ENCODE measurements at regions of chr2 and their contacts with region 1.

Region 1: DNA sequence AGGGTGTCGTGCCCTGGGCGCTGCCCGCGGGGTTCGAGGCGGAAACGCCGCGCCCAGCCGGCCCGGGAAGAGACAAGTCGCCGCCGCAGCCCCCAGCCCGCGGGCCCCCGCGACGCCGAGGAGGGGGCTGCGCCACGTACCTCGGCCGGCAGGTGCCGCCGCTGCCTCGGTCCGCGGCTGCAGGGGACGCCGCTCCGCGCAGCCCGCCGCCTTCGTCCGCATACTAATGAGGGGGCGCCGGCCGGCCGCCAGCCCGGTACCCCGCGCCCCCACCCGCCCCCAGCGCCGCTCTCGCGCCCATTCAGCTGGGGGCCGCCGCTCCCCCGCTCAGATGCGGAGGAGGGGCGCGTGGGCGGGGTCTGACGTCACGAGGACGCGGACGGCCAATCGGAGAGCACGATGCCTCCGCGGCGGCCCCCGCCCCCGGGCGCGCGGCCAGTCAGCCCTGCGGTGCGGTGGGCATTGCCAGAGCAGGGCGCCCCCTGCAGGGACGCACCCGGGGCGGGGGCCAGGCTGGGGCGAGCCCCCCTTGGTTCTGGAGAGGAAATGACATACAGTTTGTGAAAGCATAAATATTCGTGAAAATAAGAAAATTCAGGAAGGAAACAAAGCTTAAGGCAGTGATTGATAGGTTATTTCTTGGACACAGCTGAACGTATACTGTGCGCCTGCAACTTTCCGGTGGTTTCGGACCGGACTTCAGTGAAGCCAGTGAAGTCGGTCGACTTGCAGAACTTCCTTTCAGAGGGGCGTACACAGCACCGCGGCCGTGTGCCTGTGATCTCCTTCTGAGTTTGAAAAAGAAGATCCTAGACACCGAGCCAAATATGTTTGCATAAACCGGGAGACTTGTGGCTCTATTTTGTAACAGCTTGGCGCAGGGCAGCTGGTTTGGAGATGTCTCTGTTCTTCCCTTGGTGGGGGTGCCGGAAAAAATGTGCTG is at the start of gene ST3GAL5:
- DNase-seq: peak; percentile 93
- ATAC-seq: peak; percentile 85
- H3K4me3 Mint-ChIP-seq: peak within 1 kb of the TSS; percentile 94
- H3K27ac Mint-ChIP-seq: peak within 1 kb of the TSS; percentile 92
- H3K4me1 Mint-ChIP-seq: peaks cover 68% of the 10 kb centered on the region
- H3K27me3 Mint-ChIP-seq: no peaks in the 10 kb centered on the region
- total RNA-seq, gene ST3GAL5: 43.4 to 46.7 TPM

Region 2: GRCh38 chr2:85032621-85033020 is 856.3 kb before region 1 on chr2:
- CTCF ChIA-PET with region 1: no interaction called
- POLR2A ChIA-PET with region 1: no interaction called
- DNase-seq: no peak
- ATAC-seq: no peak
- H3K4me3 Mint-ChIP-seq: no peak overlapping the region
- H3K27ac Mint-ChIP-seq: no peak overlapping the region
- H3K4me1 Mint-ChIP-seq: no peaks in the 10 kb centered on the region
- H3K27me3 Mint-ChIP-seq: no peaks in the 10 kb centered on the region

Region 3: DNA sequence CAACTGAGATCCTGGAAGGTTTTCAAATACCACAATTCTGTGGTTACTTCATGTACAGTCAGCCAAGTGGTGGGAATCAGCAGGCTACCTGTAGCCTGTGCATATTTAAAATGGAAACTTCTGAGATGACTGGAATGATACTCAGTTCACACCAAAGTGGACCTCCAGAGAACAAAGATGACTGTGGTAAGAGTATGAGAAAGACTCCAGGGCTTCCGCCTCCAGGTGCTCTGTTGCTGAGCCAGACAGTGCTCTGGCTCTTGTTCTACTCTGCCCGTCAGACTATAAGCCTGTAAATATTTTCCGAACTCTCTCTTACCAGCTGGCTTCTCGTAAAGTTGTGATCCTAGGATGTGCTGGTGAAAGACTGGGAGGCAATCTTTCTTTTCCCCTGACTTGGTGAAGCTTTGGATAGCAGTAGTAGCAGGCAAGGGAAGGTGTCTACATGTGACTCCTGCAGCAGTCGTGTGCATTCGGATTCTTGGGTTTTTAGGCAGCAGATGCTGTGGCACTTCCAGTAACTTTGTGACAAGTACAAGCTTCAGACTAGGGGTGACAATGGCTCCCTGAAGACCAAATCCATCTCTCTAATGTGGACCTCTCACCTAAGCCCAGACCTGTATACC is 23.3 kb before region 1 on chr2:
- CTCF ChIA-PET with region 1: interaction called, 16 read pairs
- POLR2A ChIA-PET with region 1: no interaction called
- DNase-seq: no peak
- ATAC-seq: no peak
- H3K4me3 Mint-ChIP-seq: no peak overlapping the region
- H3K27ac Mint-ChIP-seq: no peak overlapping the region
- H3K4me1 Mint-ChIP-seq: peaks cover 59% of the 10 kb centered on the region
- H3K27me3 Mint-ChIP-seq: no peaks in the 10 kb centered on the region

Region 4: GRCh38 chr2:85902496-85902895 is 13.5 kb after region 1 on chr2:
- CTCF ChIA-PET with region 1: interaction called, 26 read pairs
- POLR2A ChIA-PET with region 1: no interaction called
- DNase-seq: no peak
- ATAC-seq: no peak
- H3K4me3 Mint-ChIP-seq: no peak overlapping the region
- H3K27ac Mint-ChIP-seq: no peak overlapping the region
- H3K4me1 Mint-ChIP-seq: peaks cover 35% of the 10 kb centered on the region
- H3K27me3 Mint-ChIP-seq: no peaks in the 10 kb centered on the region

Region 5: GRCh38 chr2:85926931-85927661 is 38.1 kb after region 1 on chr2:
- CTCF ChIA-PET with region 1: interaction called, 19 read pairs
- POLR2A ChIA-PET with region 1: interaction called, 3 read pairs
- DNase-seq: no peak
- ATAC-seq: no peak
- H3K4me3 Mint-ChIP-seq: no peak overlapping the region
- H3K27ac Mint-ChIP-seq: no peak overlapping the region
- H3K4me1 Mint-ChIP-seq: peaks cover 40% of the 10 kb centered on the region
- H3K27me3 Mint-ChIP-seq: peaks cover 2% of the 10 kb centered on the region

Region 6: DNA sequence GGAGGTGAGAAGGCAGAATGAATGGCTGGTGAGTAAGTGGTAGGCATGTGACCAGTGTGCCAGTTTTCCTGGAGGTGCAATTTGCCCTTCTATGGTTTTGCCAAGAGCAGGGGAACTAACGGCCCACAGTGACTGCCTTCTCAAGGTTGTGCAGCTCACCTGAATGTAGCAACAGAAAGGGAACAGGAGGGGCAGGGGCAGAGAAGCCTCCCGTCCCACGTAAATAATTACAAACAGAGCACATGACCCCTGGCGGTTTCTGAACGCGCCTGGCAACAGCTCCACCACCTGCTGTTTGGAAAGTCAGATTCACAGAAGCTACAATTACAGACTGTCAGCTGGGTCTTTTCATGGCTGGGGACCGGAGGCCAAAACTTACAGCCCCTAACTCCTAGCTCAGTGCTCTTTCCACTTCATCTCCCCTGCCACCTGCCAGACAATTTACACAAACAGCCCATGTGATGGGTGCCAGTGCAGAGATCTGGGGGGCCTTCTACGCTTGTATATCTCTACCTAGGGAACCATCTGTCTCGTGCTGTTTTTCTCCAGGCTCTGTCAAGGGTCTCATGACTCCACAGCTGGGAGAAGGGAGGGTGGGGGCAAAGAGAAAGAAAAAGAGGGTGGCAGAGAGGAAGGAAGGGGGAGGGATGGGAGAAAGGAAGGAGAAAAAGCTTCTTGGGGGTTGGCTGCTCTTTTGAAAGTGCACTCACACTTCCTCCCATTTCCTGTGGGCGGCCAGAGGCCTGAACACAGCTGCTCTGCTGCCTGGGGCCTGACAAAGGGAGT is 147.1 kb after region 1 on chr2:
- CTCF ChIA-PET with region 1: interaction called, 153 read pairs
- POLR2A ChIA-PET with region 1: interaction called, 33 read pairs
- DNase-seq: peak; percentile 81
- ATAC-seq: peak; percentile 48
- H3K4me3 Mint-ChIP-seq: peak overlapping the region; percentile 61
- H3K27ac Mint-ChIP-seq: peak overlapping the region; percentile 95
- H3K4me1 Mint-ChIP-seq: peaks cover 85% of the 10 kb centered on the region
- H3K27me3 Mint-ChIP-seq: no peaks in the 10 kb centered on the region

Region 7: GRCh38 chr2:86124683-86125082 is 235.7 kb after region 1 on chr2:
- CTCF ChIA-PET with region 1: no interaction called
- POLR2A ChIA-PET with region 1: no interaction called
- DNase-seq: no peak
- ATAC-seq: no peak
- H3K4me3 Mint-ChIP-seq: no peak overlapping the region
- H3K27ac Mint-ChIP-seq: no peak overlapping the region
- H3K4me1 Mint-ChIP-seq: no peaks in the 10 kb centered on the region
- H3K27me3 Mint-ChIP-seq: no peaks in the 10 kb centered on the region